Activated CD4-positive, alpha-beta T cell treated with anti-CD3 and anti-CD28 coated beads for 36 hours (primary cell): ENCODE measurements at regions of chr17 and their contacts with region 1.

Region 1: GRCh38 chr17:40410082-40410481 is 7.6 kb downstream of the TOP2A start:
- DNase-seq: no peak
- ATAC-seq: no peak
- H3K4me3 Mint-ChIP-seq: no peak overlapping the region
- H3K27ac Mint-ChIP-seq: no peak overlapping the region
- H3K4me1 Mint-ChIP-seq: peaks cover under 1% of the 10 kb centered on the region
- H3K27me3 Mint-ChIP-seq: no peaks in the 10 kb centered on the region

Region 2: DNA sequence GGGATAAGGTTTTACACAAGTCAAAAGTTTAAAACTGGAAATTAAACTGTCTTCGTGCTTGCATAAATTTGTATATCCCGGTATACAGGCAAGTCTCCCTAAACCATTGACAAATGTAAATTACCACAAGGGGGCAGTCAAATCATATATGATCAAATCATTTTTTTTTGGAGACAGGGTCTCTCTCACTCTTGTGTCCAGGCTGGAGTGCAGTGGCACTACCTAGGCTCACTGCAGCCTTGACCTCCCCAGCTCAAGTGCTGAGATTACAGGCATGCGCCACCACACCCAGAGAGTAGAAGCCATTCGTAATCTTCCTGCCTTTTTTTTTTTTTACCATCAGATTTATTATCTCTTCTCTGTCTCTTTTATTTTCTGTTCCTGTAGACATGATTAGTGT is 10.9 kb before region 1 on chr17:
- CTCF ChIA-PET with region 1: interaction called, 21 read pairs
- POLR2A ChIA-PET with region 1: interaction called, 3 read pairs
- intact Hi-C with region 1: loop called in 1 of 2 experiments (anchors 2 kb)
- DNase-seq: no peak
- ATAC-seq: peak; percentile 47
- H3K4me3 Mint-ChIP-seq: no peak overlapping the region
- H3K27ac Mint-ChIP-seq: no peak overlapping the region
- H3K4me1 Mint-ChIP-seq: peaks cover 12% of the 10 kb centered on the region
- H3K27me3 Mint-ChIP-seq: no peaks in the 10 kb centered on the region